Activated CD4-positive, alpha-beta T cell treated with anti-CD3 and anti-CD28 coated beads for 36 hours (primary cell): ENCODE measurements at regions of chr18 and their contacts with region 1.

Region 1: DNA sequence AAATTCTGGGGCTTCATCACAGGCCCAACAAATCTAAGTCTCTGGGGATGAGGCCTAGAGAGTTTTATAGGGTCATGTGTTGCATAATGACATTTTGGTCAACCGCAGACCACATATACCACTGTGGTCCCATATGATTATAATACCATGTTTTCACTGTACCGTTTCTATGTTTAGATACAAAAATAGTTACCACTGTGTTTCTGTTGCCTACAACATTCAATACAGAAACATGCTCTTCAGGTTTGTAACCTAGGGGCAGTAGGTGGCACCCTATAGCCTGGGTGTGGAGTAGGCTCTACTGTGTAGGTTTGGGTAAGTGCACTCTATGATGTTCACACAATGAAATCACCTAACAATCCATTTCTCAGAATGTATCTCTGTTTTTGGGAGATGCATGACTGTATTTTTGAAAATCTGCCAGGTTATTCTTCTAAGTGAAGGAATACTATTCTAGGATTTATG is 485.2 kb downstream of the PTPRM start:
- DNase-seq: peak; percentile 25
- ATAC-seq: peak; percentile 76
- H3K4me3 Mint-ChIP-seq: no peak overlapping the region
- H3K27ac Mint-ChIP-seq: no peak overlapping the region
- H3K4me1 Mint-ChIP-seq: peaks cover 28% of the 10 kb centered on the region
- H3K27me3 Mint-ChIP-seq: no peaks in the 10 kb centered on the region

Region 2: DNA sequence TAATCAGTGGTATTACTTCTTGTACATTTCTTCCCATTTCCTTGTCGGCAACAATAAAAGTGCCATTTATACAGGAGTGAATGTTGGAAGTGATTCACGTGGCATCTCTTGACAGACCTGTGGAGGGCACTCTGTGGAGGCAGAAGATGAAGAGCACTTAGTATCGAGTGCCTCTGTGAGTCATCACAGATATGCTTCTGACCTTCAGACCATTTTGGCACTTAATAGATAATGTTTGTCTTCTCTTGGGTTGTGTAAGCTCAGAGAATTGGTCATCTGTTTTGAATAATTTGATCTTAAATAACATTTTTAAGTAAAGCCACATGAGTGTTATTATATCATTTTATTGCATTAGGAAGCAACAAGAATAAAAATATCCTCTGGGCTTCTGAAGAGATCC is 179.7 kb before region 1 on chr18:
- CTCF ChIA-PET with region 1: no interaction called
- POLR2A ChIA-PET with region 1: no interaction called
- intact Hi-C with region 1: loop called in 1 of 2 experiments (anchors 10 kb)
- DNase-seq: no peak
- ATAC-seq: no peak
- H3K4me3 Mint-ChIP-seq: no peak overlapping the region
- H3K27ac Mint-ChIP-seq: no peak overlapping the region
- H3K4me1 Mint-ChIP-seq: no peaks in the 10 kb centered on the region
- H3K27me3 Mint-ChIP-seq: peaks cover 3% of the 10 kb centered on the region